ENCODE measurements at regions of chr13 and their contacts with region 1.

Region 1: GRCh38 chr13:27665333-27665732 is 43.6 kb downstream of the POLR1D start:
- DNase-seq: peak; percentile 35
- ATAC-seq: no peak
- H3K4me3 ChIP-seq: no peak overlapping the region
- H3K27ac ChIP-seq: no peak overlapping the region
- H3K4me1 ChIP-seq: no peaks in the 10 kb centered on the region
- H3K27me3 ChIP-seq: no peaks in the 10 kb centered on the region
- CTCF ChIP-seq: peak; percentile 59

Region 2: DNA sequence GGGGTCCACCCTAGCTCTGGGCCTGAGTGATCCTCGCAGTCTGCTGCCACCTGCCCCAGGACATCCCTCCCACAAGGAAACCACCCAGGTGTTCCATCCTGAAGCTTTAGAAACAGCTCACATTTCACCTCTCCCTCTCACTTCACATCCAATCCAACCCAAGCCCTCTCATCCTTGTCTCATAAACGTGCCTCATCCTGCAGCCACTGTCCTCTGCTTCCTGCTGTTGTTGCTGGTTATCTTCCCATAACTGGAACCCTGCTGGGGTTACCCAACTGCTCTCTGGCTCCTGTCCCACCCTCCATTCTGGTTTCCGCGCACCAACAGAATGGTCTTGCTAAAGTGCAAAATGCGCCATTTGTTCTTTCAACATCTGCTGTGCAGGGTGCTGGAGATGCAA is 155.3 kb before region 1 on chr13:
- CTCF ChIA-PET with region 1: no interaction called
- POLR2A ChIA-PET with region 1: no interaction called
- intact Hi-C with region 1: no loop called
- DNase-seq: no peak
- ATAC-seq: no peak
- H3K4me3 ChIP-seq: no peak overlapping the region
- H3K27ac ChIP-seq: no peak overlapping the region
- H3K4me1 ChIP-seq: no peaks in the 10 kb centered on the region
- H3K27me3 ChIP-seq: peaks cover 15% of the 10 kb centered on the region
- CTCF ChIP-seq: no peak

Region 3: DNA sequence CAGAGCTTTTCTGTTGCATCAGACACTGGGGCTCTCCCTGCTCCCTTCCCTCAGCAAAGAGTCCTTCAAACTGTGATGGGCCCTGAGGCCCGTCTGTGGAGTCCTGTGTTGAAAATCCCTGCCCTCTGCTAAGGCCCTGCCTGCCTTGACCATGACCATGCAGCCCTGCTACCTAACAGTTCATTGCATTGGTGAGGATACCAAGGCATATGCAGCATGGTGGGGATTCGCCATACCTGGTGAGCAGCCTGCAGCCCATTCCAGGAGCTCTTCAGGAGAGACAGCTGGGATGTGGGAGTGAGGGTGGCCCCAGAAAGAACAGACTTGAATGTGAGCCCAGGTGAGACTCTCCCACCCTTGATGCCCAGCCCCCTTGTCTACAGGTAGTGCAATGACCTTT is 56.3 kb after region 1 on chr13:
- CTCF ChIA-PET with region 1: no interaction called
- POLR2A ChIA-PET with region 1: no interaction called
- intact Hi-C with region 1: no loop called
- DNase-seq: no peak
- ATAC-seq: no peak
- H3K4me3 ChIP-seq: no peak overlapping the region
- H3K27ac ChIP-seq: no peak overlapping the region
- H3K4me1 ChIP-seq: no peaks in the 10 kb centered on the region
- H3K27me3 ChIP-seq: peaks cover 26% of the 10 kb centered on the region; the same call in 1 of the 2 replicates
- CTCF ChIP-seq: no peak

Region 4: DNA sequence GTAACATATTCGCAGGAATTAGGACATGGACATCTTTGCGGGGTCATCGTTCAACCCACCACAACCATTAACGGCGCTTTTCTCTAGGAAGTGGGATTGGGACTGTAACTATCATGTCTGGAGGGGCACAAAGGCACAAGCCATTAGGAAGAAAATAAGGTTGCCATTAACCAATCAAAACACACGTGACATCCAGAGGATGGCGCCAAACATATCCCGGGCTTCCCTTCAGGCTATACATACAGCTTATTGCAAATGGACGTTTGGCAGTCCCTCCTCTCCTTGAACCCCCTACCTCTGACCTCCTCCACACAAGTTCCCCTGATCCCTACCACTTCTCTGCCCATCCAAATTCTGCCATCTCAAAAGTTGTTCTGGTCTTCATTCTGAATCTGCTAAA is 100.3 kb after region 1 on chr13:
- CTCF ChIA-PET with region 1: no interaction called
- POLR2A ChIA-PET with region 1: no interaction called
- intact Hi-C with region 1: loop called (anchors 10 kb)
- DNase-seq: no peak
- ATAC-seq: no peak
- H3K4me3 ChIP-seq: no peak overlapping the region
- H3K27ac ChIP-seq: no peak overlapping the region
- H3K4me1 ChIP-seq: no peaks in the 10 kb centered on the region
- H3K27me3 ChIP-seq: 0 out of 2 replicates have a peak, but pooled peaks cover 13% of the 10 kb centered on the region
- CTCF ChIP-seq: no peak

Region 5: DNA sequence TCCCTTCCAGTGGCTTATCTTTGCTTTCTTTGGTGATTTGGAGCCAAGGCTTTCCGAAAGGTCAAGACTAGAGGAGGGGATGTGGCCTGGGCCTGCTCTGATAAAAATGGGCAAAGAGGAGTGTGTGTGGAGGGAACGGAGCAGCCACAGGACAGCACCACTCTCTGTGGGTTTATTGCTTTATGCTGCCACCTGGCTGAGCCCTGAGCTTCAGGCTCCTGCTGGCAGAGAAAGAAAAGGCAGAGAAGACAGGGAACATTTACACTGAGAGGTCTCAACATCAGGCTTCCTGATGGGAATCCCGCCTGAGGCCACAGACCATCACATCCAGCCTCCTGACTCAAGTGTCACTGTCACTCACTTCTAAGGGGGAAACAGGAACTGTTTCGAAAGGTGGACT is 117.8 kb after region 1 on chr13:
- CTCF ChIA-PET with region 1: no interaction called
- POLR2A ChIA-PET with region 1: no interaction called
- intact Hi-C with region 1: loop called (anchors 2 kb)
- DNase-seq: peak; percentile 21
- ATAC-seq: peak; percentile 73
- H3K4me3 ChIP-seq: no peak overlapping the region
- H3K27ac ChIP-seq: no peak overlapping the region
- H3K4me1 ChIP-seq: no peaks in the 10 kb centered on the region
- H3K27me3 ChIP-seq: peaks cover 20% of the 10 kb centered on the region
- CTCF ChIP-seq: peak; percentile 47

Measured in PC-3 (cell line).